GM12878 (cell line): ENCODE measurements at regions of chr3 and their contacts with region 1.

Region 1: GRCh38 chr3:194671900-194672808 is at the start of gene LSG1:
- DNase-seq: peak; percentile 76
- ATAC-seq: peak; percentile 94
- H3K4me3 ChIP-seq: peak within 1 kb of the TSS; percentile 93
- H3K27ac ChIP-seq: peak within 1 kb of the TSS; percentile 96
- H3K4me1 ChIP-seq: peaks cover 21% of the 10 kb centered on the region
- H3K27me3 ChIP-seq: no peaks in the 10 kb centered on the region
- CTCF ChIP-seq: no peak
- EP300 ChIP-seq: no peak
- POLR2A ChIP-seq: peak; percentile 79
- RAD21 ChIP-seq: no peak
- polyA plus RNA-seq, gene LSG1: 14.3 to 23.5 TPM

Region 2: DNA sequence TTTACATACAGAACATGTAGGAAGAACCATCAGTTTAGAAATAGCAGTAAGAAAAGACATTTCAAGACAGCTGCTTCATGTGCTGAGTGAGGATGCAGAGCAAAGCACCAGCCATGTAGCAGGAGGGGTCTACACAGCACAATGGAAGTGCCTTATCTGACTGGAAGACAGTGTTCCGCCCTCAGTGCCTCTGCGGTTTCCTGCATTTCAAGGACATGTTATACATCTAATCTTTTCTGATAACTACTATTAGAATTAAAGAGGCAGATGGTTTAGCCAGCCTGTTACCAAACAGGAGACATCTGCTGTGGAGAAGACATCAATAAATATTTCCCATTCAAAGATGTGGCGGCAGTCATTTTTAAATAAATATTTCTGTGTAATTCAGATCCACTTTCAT is 10.8 kb before region 1 on chr3:
- CTCF ChIA-PET with region 1: interaction called, 31 read pairs
- POLR2A ChIA-PET with region 1: interaction called, 5 read pairs
- RAD21 ChIA-PET with region 1: no interaction called
- SMC1A ChIA-PET with region 1: interaction called, 5 read pairs
- in situ Hi-C with region 1: no loop called
- intact Hi-C with region 1: no loop called
- DNase-seq: no peak
- ATAC-seq: no peak
- H3K4me3 ChIP-seq: no peak overlapping the region
- H3K27ac ChIP-seq: no peak overlapping the region
- H3K4me1 ChIP-seq: no peaks in the 10 kb centered on the region
- H3K27me3 ChIP-seq: no peaks in the 10 kb centered on the region
- CTCF ChIP-seq: no peak
- EP300 ChIP-seq: no peak
- POLR2A ChIP-seq: no peak
- RAD21 ChIP-seq: no peak

Region 3: GRCh38 chr3:194879991-194880939 is 208.1 kb after region 1 on chr3:
- CTCF ChIA-PET with region 1: no interaction called
- POLR2A ChIA-PET with region 1: no interaction called
- RAD21 ChIA-PET with region 1: no interaction called
- SMC1A ChIA-PET with region 1: no interaction called
- in situ Hi-C with region 1: no loop called
- intact Hi-C with region 1: no loop called
- DNase-seq: no peak
- ATAC-seq: no peak
- H3K4me3 ChIP-seq: no peak overlapping the region
- H3K27ac ChIP-seq: no peak overlapping the region
- H3K4me1 ChIP-seq: 0 out of 2 replicates have a peak, but pooled peaks cover 3% of the 10 kb centered on the region
- H3K27me3 ChIP-seq: 0 out of 4 replicates have a peak, but pooled peaks cover 0 to 1% of the 10 kb centered on the region in 2 experiments
- CTCF ChIP-seq: no peak
- EP300 ChIP-seq: no peak
- POLR2A ChIP-seq: no peak
- RAD21 ChIP-seq: no peak

Region 4: DNA sequence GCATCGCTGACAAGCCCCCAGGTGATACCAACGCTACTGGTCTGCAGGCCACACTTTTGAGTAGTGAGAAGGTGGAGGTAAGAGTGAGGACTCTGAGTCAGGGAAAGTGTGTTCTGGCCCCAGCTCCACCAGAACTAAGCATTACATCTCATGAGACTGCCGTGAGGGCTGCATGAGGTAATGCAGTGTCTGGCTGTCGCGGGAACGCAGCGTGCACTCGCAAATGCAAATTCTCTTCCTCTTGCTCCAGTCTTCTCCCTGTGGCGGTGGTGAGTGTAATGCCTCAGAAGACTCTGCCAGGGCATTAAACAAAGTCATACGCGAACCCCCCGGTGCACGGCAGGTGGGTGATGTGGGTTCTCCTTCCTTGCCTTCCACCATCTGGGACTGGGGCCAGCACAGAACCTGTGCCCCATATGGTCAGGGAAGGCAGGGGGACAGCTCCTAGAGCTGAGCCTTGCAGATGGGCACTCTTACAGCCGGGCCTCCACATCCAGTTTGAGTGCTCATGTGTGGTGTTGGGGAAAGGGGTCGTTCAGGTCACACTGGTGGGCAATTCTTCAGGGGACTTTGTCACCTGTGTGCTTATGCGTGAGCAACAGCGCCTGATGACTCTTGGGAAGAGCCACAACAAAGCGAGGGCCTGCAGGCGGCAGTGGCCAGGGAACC is 423.0 kb after region 1 on chr3:
- CTCF ChIA-PET with region 1: interaction called, 3 read pairs
- POLR2A ChIA-PET with region 1: no interaction called
- RAD21 ChIA-PET with region 1: no interaction called
- SMC1A ChIA-PET with region 1: no interaction called
- in situ Hi-C with region 1: loop called (anchors 5 kb)
- intact Hi-C with region 1: no loop called
- DNase-seq: peak; percentile 39
- ATAC-seq: peak; percentile 78
- H3K4me3 ChIP-seq: no peak overlapping the region; the same call in 1 of the 2 replicates
- H3K27ac ChIP-seq: peak overlapping the region; percentile 62
- H3K4me1 ChIP-seq: peaks cover 41% of the 10 kb centered on the region
- H3K27me3 ChIP-seq: no peaks in the 10 kb centered on the region
- CTCF ChIP-seq: no peak
- EP300 ChIP-seq: no peak
- POLR2A ChIP-seq: peak; percentile 61
- RAD21 ChIP-seq: no peak

Region 5: GRCh38 chr3:195250473-195251251 is 578.5 kb after region 1 on chr3:
- CTCF ChIA-PET with region 1: interaction called, 23 read pairs
- POLR2A ChIA-PET with region 1: interaction called, 5 read pairs
- RAD21 ChIA-PET with region 1: interaction called, 7 read pairs
- SMC1A ChIA-PET with region 1: interaction called, 3 read pairs
- in situ Hi-C with region 1: no loop called
- intact Hi-C with region 1: no loop called
- DNase-seq: no peak
- ATAC-seq: peak; percentile 76
- H3K4me3 ChIP-seq: no peak overlapping the region
- H3K27ac ChIP-seq: peak overlapping the region; percentile 23
- H3K4me1 ChIP-seq: peaks cover 25% of the 10 kb centered on the region
- H3K27me3 ChIP-seq: no peaks in the 10 kb centered on the region
- CTCF ChIP-seq: peak; percentile 39 to 60 (median 42); a peak in 5 of 6 replicates
- EP300 ChIP-seq: no peak
- POLR2A ChIP-seq: no peak
- RAD21 ChIP-seq: peak; percentile 55

Region 6: GRCh38 chr3:195442573-195443390 is 770.6 kb after region 1 on chr3 and contains the start of gene ACAP2:
- CTCF ChIA-PET with region 1: interaction called, 3 read pairs
- POLR2A ChIA-PET with region 1: no interaction called
- RAD21 ChIA-PET with region 1: interaction called, 3 read pairs
- SMC1A ChIA-PET with region 1: no interaction called
- in situ Hi-C with region 1: loop called (anchors 10 kb)
- intact Hi-C with region 1: no loop called
- DNase-seq: peak; percentile 93
- ATAC-seq: peak; percentile 93
- H3K4me3 ChIP-seq: peak within 1 kb of the TSS; percentile 89
- H3K27ac ChIP-seq: peak within 1 kb of the TSS; percentile 82
- H3K4me1 ChIP-seq: peaks cover 7% of the 10 kb centered on the region
- H3K27me3 ChIP-seq: no peaks in the 10 kb centered on the region
- CTCF ChIP-seq: no peak
- EP300 ChIP-seq: no peak
- POLR2A ChIP-seq: peak; percentile 98
- RAD21 ChIP-seq: no peak
- polyA plus RNA-seq, gene ACAP2: 7.1 to 10.5 TPM